Activated CD8-positive, alpha-beta memory T cell treated with anti-CD3 and anti-CD28 coated beads, Interleukin-2, amount 10 ng/mL, durations not matched to agents 7 days and 5 days (primary cell): ENCODE measurements at regions of chr12 and their contacts with region 1.

Region 1: DNA sequence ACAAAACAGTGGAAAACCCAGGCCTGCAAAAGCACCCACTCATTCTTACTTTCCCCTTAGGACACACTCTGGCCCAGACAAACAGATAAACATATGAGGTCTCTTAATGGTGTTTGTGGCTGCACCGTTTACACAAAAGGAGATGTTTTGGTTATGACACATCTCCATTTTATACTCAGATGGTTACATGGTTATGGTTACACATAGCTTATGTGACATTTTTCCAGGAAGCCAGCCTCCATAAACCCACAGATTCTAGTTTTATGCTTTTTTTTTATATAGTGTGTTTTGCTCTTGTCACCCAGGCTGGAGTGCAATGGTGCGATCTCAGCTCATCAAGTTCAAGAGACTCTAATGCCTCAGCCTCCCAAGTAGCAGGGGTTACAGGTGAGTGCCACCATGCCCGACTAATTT is 3.5 kb upstream of the KLRD1 start:
- DNase-seq: peak; percentile 85
- ATAC-seq: peak; percentile 58
- H3K4me3 Mint-ChIP-seq: peak overlapping the region; percentile 83
- H3K27ac Mint-ChIP-seq: peak overlapping the region; percentile 93
- H3K4me1 Mint-ChIP-seq: peaks cover 72% of the 10 kb centered on the region
- H3K27me3 Mint-ChIP-seq: no peaks in the 10 kb centered on the region

Region 2: GRCh38 chr12:10243818-10244520 is 60.2 kb before region 1 on chr12:
- CTCF ChIA-PET with region 1: interaction called, 11 read pairs
- DNase-seq: peak; percentile 78
- ATAC-seq: peak; percentile 74
- H3K4me3 Mint-ChIP-seq: peak overlapping the region; percentile 70
- H3K27ac Mint-ChIP-seq: peak overlapping the region; percentile 90
- H3K4me1 Mint-ChIP-seq: peaks cover 64% of the 10 kb centered on the region
- H3K27me3 Mint-ChIP-seq: no peaks in the 10 kb centered on the region

Region 3: GRCh38 chr12:10293570-10294227 is 10.5 kb before region 1 on chr12:
- CTCF ChIA-PET with region 1: interaction called, 12 read pairs
- DNase-seq: peak; percentile 64
- ATAC-seq: peak; percentile 52
- H3K4me3 Mint-ChIP-seq: peak overlapping the region; percentile 55
- H3K27ac Mint-ChIP-seq: peak overlapping the region; percentile 95
- H3K4me1 Mint-ChIP-seq: peaks cover 74% of the 10 kb centered on the region
- H3K27me3 Mint-ChIP-seq: no peaks in the 10 kb centered on the region

Region 4: DNA sequence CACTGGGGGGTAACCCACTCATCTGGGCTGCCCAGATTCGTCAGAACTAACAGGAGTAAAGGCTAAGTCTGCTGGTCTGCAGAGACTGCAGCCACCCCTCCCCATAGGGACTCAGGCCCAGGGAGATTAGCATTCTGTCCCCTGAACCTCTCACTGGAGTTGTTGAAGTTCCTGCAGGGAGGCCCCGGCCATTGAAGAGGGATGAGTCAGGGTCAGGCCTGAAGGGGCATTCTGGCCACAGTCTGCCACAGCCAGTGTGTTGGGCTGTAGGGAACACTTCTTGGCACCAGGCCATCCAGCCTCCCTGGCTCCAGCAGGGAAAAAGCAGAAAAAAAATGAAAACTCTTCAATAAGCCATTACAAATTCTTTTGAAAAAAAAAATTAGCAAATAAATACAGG is 50.3 kb after region 1 on chr12:
- CTCF ChIA-PET with region 1: no interaction called
- DNase-seq: no peak
- ATAC-seq: no peak
- H3K4me3 Mint-ChIP-seq: no peak overlapping the region
- H3K27ac Mint-ChIP-seq: no peak overlapping the region
- H3K4me1 Mint-ChIP-seq: peaks cover 13% of the 10 kb centered on the region
- H3K27me3 Mint-ChIP-seq: no peaks in the 10 kb centered on the region